ENCODE measurements at regions of chr5 and their contacts with region 1.

Region 1: DNA sequence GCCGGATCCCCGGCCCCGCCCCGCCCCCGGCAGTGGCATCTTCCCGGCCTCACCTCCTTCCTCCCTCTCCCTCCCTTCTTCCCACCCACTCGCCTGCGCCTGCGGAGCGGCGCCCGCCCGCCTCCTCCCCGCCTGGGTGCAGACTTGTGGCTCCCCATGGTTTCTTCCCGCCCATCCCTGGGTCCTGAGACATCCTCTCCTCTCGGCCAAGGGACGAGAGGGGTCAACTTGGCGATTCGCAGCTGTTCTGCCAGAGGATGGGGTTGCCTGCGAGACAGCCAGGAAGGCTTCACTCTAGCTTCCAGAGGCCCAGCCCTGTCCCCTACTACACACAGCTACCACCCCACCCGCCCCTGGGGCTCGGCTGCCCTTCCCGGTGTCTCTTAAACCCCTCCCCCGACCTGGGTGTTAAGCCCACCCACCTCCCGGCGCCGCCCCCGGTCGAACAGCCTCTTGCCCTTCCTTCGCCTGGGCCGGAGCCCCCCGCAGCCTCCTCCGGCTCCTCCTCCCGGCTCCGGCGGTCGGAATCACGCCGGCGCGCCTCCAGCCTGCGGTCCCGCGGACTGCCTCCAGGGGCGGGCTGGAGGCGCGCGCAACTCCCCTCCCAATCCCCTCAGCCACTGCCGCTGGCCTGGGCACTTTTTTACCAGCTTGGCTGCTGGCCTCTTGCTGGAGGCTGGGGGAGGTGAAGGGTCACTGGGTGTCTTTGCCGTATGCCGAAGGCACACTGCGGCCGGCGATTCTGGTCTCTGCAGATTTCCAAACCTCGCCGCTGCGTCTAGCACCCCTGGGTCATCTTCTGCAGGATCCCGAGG is 1.9 kb downstream of the JADE2 start:
- DNase-seq: peak; percentile 41 to 85 (median 70)
- ATAC-seq: peak; percentile 34
- H3K4me3 ChIP-seq: peak overlapping the region; percentile 82 to 87
- H3K4me3 Mint-ChIP-seq: peak overlapping the region; percentile 96
- H3K27ac ChIP-seq: peak overlapping the region; percentile 98
- H3K27ac Mint-ChIP-seq: peak overlapping the region; percentile 94
- H3K4me1 ChIP-seq: peaks cover 57% of the 10 kb centered on the region
- H3K4me1 Mint-ChIP-seq: peaks cover 58% of the 10 kb centered on the region
- H3K27me3 ChIP-seq: no peaks in the 10 kb centered on the region
- H3K27me3 Mint-ChIP-seq: no peaks in the 10 kb centered on the region
- CTCF ChIP-seq: peak; percentile 79

Region 2: DNA sequence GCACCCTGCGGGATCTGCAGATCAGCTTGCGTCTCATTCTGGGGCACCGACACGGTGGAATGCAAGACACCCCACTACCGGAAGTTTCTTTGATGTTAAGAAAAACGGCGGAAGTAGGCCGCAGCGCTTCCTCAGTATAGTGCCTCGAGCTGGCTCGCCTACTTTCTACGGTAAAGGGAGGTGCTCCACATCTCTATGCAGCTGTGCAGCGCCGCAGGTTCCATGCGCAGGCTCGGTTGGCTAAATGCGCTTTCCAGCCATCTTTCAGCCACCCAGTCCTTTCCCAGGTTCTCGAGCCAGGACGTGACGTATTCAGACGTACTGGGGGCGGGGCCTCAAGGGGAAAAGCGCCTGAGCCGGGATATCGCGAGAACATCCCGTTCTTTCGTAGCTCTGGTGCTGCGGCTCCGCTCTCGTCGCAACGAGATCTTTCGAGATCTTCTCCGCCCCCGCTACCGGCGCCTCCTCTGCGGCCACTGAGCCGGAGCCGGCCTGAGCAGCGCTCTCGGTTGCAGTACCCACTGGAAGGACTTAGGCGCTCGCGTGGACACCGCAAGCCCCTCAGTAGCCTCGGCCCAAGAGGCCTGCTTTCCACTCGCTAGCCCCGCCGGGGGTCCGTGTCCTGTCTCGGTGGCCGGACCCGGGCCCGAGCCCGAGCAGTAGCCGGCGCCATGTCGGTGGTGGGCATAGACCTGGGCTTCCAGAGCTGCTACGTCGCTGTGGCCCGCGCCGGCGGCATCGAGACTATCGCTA is 1475.6 kb before region 1 on chr5 and contains the start of gene HSPA4:
- CTCF ChIA-PET with region 1: no interaction called
- POLR2A ChIA-PET with region 1: no interaction called
- intact Hi-C with region 1: loop called in 1 of 2 experiments (anchors 5 kb)
- DNase-seq: peak; percentile 93 to 100 (median 97)
- ATAC-seq: peak; percentile 89
- H3K4me3 ChIP-seq: peak within 1 kb of the TSS; percentile 88 to 100
- H3K4me3 Mint-ChIP-seq: peak within 1 kb of the TSS; percentile 99
- H3K27ac ChIP-seq: peak within 1 kb of the TSS; percentile 97
- H3K27ac Mint-ChIP-seq: peak within 1 kb of the TSS; percentile 100
- H3K4me1 ChIP-seq: peaks cover 46% of the 10 kb centered on the region
- H3K4me1 Mint-ChIP-seq: peaks cover 56% of the 10 kb centered on the region
- H3K27me3 ChIP-seq: no peaks in the 10 kb centered on the region
- H3K27me3 Mint-ChIP-seq: no peaks in the 10 kb centered on the region
- CTCF ChIP-seq: no peak
- total RNA-seq, gene HSPA4: 24.4 to 29.7 TPM

Region 3: GRCh38 chr5:133508845-133509741 is 1018.3 kb before region 1 on chr5:
- CTCF ChIA-PET with region 1: no interaction called
- POLR2A ChIA-PET with region 1: no interaction called
- intact Hi-C with region 1: no loop called
- DNase-seq: no peak
- ATAC-seq: no peak
- H3K4me3 ChIP-seq: no peak overlapping the region
- H3K4me3 Mint-ChIP-seq: no peak overlapping the region
- H3K27ac ChIP-seq: no peak overlapping the region
- H3K27ac Mint-ChIP-seq: no peak overlapping the region
- H3K4me1 ChIP-seq: no peaks in the 10 kb centered on the region
- H3K4me1 Mint-ChIP-seq: no peaks in the 10 kb centered on the region
- H3K27me3 ChIP-seq: no peaks in the 10 kb centered on the region
- H3K27me3 Mint-ChIP-seq: peaks cover 21% of the 10 kb centered on the region
- CTCF ChIP-seq: no peak

Region 4: GRCh38 chr5:134225618-134226440 is 301.5 kb before region 1 on chr5 and contains the start of gene PPP2CA:
- CTCF ChIA-PET with region 1: no interaction called
- POLR2A ChIA-PET with region 1: interaction called, 4 read pairs
- intact Hi-C with region 1: loop called in 1 of 2 experiments (anchors 1 kb)
- DNase-seq: peak; percentile 98 to 100 (median 99)
- ATAC-seq: peak; percentile 80
- H3K4me3 ChIP-seq: peak within 1 kb of the TSS; percentile 83 to 87
- H3K4me3 Mint-ChIP-seq: peak within 1 kb of the TSS; percentile 96
- H3K27ac ChIP-seq: peak within 1 kb of the TSS; percentile 95 to 96
- H3K27ac Mint-ChIP-seq: peak within 1 kb of the TSS; percentile 98
- H3K4me1 ChIP-seq: peaks cover 45% of the 10 kb centered on the region
- H3K4me1 Mint-ChIP-seq: peaks cover 50% of the 10 kb centered on the region
- H3K27me3 ChIP-seq: no peaks in the 10 kb centered on the region
- H3K27me3 Mint-ChIP-seq: no peaks in the 10 kb centered on the region
- CTCF ChIP-seq: no peak
- total RNA-seq, gene PPP2CA: 233 to 260 TPM

Region 5: DNA sequence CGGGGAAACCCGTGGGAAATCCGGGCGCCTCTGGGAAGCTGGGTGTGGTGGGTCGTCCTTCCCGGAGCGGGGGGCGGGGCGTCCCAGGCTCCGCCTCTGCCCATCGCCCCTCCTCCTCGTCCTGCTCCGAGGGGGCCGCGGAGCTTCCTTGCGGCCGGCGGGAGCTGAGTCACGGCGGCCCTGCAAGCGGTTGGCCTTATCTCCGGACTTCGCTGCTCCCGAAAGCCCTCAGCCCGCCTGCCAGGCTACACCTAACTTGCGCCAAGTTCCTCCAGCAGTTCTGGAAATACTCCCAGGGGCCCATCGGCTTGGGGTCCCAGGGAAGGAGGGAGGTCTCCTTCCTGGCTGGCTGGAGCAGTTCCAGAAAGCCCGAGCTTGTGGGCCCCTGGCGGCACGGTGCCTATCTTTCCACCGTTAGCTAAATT is 61.5 kb before region 1 on chr5:
- CTCF ChIA-PET with region 1: interaction called, 5 read pairs
- POLR2A ChIA-PET with region 1: interaction called, 26 read pairs
- intact Hi-C with region 1: loop called (anchors 1 to 5 kb)
- DNase-seq: peak in 7 of 9 experiments; percentile 33 to 76 (median 48)
- ATAC-seq: peak; percentile 74
- H3K4me3 ChIP-seq: peak overlapping the region; percentile 56 to 78
- H3K4me3 Mint-ChIP-seq: peak overlapping the region; percentile 86
- H3K27ac ChIP-seq: peak overlapping the region; percentile 14 to 46
- H3K27ac Mint-ChIP-seq: peak overlapping the region; percentile 61
- H3K4me1 ChIP-seq: peaks cover 21% of the 10 kb centered on the region
- H3K4me1 Mint-ChIP-seq: peaks cover 17% of the 10 kb centered on the region
- H3K27me3 ChIP-seq: no peaks in the 10 kb centered on the region
- H3K27me3 Mint-ChIP-seq: no peaks in the 10 kb centered on the region
- CTCF ChIP-seq: no peak

Region 6: GRCh38 chr5:134541736-134542376 is 14.5 kb after region 1 on chr5:
- CTCF ChIA-PET with region 1: interaction called, 16 read pairs
- POLR2A ChIA-PET with region 1: interaction called, 8 read pairs
- intact Hi-C with region 1: loop called (anchors 2 kb)
- DNase-seq: no peak
- ATAC-seq: no peak
- H3K4me3 ChIP-seq: no peak overlapping the region
- H3K4me3 Mint-ChIP-seq: no peak overlapping the region
- H3K27ac ChIP-seq: no peak overlapping the region
- H3K27ac Mint-ChIP-seq: peak overlapping the region; percentile 46
- H3K4me1 ChIP-seq: peaks cover 41% of the 10 kb centered on the region
- H3K4me1 Mint-ChIP-seq: peaks cover 48% of the 10 kb centered on the region
- H3K27me3 ChIP-seq: no peaks in the 10 kb centered on the region
- H3K27me3 Mint-ChIP-seq: no peaks in the 10 kb centered on the region
- CTCF ChIP-seq: no peak

Region 7: GRCh38 chr5:134648425-134649162 is 121.2 kb after region 1 on chr5 and contains the start of gene SEC24A:
- CTCF ChIA-PET with region 1: no interaction called
- POLR2A ChIA-PET with region 1: interaction called, 3 read pairs
- intact Hi-C with region 1: loop called (anchors 2 to 5 kb)
- DNase-seq: peak; percentile 75 to 98 (median 88)
- ATAC-seq: peak; percentile 77
- H3K4me3 ChIP-seq: peak within 1 kb of the TSS; percentile 74 to 98
- H3K4me3 Mint-ChIP-seq: peak within 1 kb of the TSS; percentile 96
- H3K27ac ChIP-seq: peak within 1 kb of the TSS; percentile 83 to 100
- H3K27ac Mint-ChIP-seq: peak within 1 kb of the TSS; percentile 99
- H3K4me1 ChIP-seq: peaks cover 12% of the 10 kb centered on the region
- H3K4me1 Mint-ChIP-seq: peaks cover 30% of the 10 kb centered on the region
- H3K27me3 ChIP-seq: no peaks in the 10 kb centered on the region
- H3K27me3 Mint-ChIP-seq: no peaks in the 10 kb centered on the region
- CTCF ChIP-seq: no peak
- total RNA-seq, gene SEC24A: 14.4 to 14.5 TPM

Region 8: GRCh38 chr5:134873987-134874830 is 346.9 kb after region 1 on chr5 and contains the start of gene TXNDC15:
- CTCF ChIA-PET with region 1: no interaction called
- POLR2A ChIA-PET with region 1: no interaction called
- intact Hi-C with region 1: no loop called
- DNase-seq: peak; percentile 61 to 91 (median 80)
- ATAC-seq: peak; percentile 92
- H3K4me3 ChIP-seq: peak within 1 kb of the TSS; percentile 59 to 92
- H3K4me3 Mint-ChIP-seq: peak within 1 kb of the TSS; percentile 92
- H3K27ac ChIP-seq: peak within 1 kb of the TSS; percentile 67 to 96
- H3K27ac Mint-ChIP-seq: peak within 1 kb of the TSS; percentile 94
- H3K4me1 ChIP-seq: peaks cover 36% of the 10 kb centered on the region
- H3K4me1 Mint-ChIP-seq: peaks cover 40% of the 10 kb centered on the region
- H3K27me3 ChIP-seq: no peaks in the 10 kb centered on the region
- H3K27me3 Mint-ChIP-seq: no peaks in the 10 kb centered on the region
- CTCF ChIP-seq: no peak
- total RNA-seq, gene TXNDC15: 19.8 to 21.0 TPM

Measured in CD8-positive, alpha-beta T cell (primary cell).